Dorsolateral prefrontal cortex (tissue), 120 donors: ENCODE measurements at regions of chr5 and their contacts with region 1.

Region 1: GRCh38 chr5:108748401-108749127 is 867 bp downstream of the FER start:
- DNase-seq: peak; percentile 99 to 100 (median 100)
- H3K4me3 ChIP-seq: peak overlapping the region; percentile 67 to 99 (median 93)
- H3K27ac ChIP-seq: peak overlapping the region; percentile 63 to 99 (median 95)
- H3K27me3 ChIP-seq: no peaks in the 10 kb centered on the region
- CTCF ChIP-seq: peak in 32 of 56 donors; percentile 5 to 60 (median 36)

Region 2: GRCh38 chr5:108579236-108579635 is 169.3 kb before region 1 on chr5:
- intact Hi-C with region 1: no loop called
- DNase-seq: no peak
- H3K4me3 ChIP-seq: no peak overlapping the region
- H3K27ac ChIP-seq: no peak overlapping the region
- H3K27me3 ChIP-seq: peaks cover 0 to 9% (median 0%) of the 10 kb centered on the region in 45 donors
- CTCF ChIP-seq: no peak

Region 3: DNA sequence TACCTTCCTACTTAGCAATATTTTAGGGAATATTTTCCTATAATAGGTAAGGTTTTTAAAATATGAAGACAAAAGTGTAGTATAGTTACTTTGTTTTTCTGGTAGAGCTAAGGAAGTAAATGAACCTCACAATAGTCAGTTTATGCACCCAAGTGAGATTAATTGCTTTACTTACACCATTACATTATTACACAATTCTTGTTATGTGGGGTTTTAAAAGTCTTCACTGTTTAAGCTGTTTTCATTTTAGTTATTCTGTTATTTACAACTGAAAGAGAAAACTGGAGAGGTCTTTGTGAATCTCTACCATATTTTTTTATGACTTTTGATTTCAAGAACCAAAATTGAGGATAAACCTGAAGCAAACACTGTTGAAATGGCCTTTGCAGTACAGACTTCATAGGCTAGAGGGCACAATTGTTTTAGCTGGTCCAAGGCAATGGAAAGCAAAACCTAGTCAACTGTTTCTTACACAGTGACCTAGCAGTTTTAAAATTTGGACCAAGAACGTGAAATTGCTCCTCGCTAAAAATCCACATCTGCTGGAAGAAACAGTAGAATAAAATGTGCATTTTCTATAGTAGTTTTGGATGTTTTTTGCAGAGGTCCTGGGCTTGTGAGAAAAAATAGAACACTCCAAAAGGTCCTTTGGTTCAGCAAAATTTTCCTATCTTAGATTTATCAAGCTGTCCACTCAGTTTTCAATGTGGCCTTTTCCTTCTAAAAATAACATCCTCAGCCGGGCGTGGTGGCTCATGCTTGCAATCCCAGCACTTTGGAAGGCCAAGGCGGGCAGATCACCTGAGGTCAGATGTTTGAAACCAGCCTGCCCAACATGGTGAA is 67.3 kb before region 1 on chr5:
- intact Hi-C with region 1: loop called in 1 of 2 experiments (anchors 1 kb)
- DNase-seq: peak in 1 of 10 donors; percentile 17
- H3K4me3 ChIP-seq: peak overlapping the region in 23 of 59 donors; percentile 3 to 50 (median 30)
- H3K27ac ChIP-seq: peak overlapping the region in 22 of 59 donors; percentile 26 to 77 (median 48)
- H3K27me3 ChIP-seq: no peaks in the 10 kb centered on the region
- CTCF ChIP-seq: peak; percentile 53 to 91 (median 78)

Region 4: DNA sequence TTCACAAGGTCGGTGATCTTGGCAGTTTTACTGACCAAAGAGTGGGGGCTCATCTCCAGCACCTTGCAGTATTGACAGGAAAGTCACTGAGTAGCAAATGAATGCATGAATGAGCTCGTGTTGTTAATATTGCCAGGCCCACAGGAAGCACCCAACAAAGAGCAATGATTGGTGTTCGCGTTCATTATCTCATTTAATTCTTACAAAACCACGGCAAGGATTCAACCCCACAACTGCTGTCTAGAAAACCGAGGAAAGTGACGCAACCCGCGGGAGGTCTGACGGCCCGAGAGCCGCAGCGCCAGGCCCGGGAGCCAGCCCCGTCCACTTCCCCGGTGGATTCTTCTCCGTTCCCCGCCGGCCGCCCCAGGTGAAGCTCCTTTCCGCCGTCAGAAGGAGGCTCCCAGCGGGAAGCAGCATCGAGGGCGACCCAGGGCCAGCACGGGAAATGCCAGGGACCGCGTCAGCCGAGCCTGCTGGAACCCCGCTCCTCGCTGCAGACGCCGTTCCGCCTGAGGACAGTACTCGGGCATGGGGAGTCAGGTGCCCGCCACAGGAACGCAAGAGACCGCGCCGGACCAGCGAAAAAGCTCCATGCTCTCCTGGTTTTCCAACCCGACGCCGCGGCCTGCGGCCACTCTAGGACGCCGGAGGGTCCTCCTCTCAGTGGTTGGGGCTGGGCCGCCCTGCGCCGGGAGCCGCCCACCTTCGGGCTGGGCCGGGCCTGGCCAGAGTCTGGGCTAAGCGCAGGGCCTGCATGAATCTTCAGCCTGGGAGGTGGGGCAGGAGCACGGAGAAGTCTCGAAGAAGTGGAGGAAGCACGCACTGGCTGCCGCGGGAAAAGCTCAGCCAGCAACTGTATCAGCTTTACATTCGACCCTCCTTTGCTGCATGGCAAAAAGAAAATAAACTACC is 20.7 kb before region 1 on chr5:
- intact Hi-C with region 1: loop called (anchors 1 to 2 kb)
- DNase-seq: peak; percentile 60 to 88 (median 78)
- H3K4me3 ChIP-seq: peak overlapping the region; percentile 60 to 88 (median 77)
- H3K27ac ChIP-seq: peak overlapping the region; percentile 7 to 95 (median 83)
- H3K27me3 ChIP-seq: no peaks in the 10 kb centered on the region
- CTCF ChIP-seq: peak in 17 of 56 donors; percentile 6 to 50 (median 25)